ENCODE measurements at regions of chr1 and their contacts with region 1.

Region 1: GRCh38 chr1:87292684-87293493 is 35.8 kb upstream of the LMO4 start:
- DNase-seq: no peak
- ATAC-seq: no peak
- H3K4me3 ChIP-seq: no peak overlapping the region
- H3K27ac ChIP-seq: no peak overlapping the region
- H3K4me1 ChIP-seq: no peaks in the 10 kb centered on the region
- H3K27me3 ChIP-seq: no peaks in the 10 kb centered on the region

Region 2: DNA sequence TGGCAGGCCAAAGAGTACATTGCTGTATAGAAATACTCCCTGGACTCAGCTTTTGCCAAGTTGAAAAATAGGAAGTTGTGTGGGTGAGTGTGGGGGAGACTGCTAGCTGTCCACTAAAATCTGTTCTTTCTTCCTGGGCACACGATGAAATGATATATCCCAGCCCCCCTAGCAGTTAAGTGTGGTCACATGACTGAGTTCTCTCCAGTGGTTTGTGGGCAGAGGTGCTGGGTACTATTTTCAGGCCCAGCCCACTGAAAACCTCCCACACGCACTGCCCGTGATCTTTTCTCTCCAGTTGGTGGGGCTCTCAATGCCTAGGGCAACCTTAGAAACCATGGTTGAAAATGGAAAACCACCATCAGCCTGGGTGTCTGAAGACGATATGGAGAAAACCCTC is 84.0 kb before region 1 on chr1:
- intact Hi-C with region 1: no loop called
- DNase-seq: no peak
- ATAC-seq: no peak
- H3K4me3 ChIP-seq: no peak overlapping the region
- H3K27ac ChIP-seq: no peak overlapping the region
- H3K4me1 ChIP-seq: no peaks in the 10 kb centered on the region
- H3K27me3 ChIP-seq: no peaks in the 10 kb centered on the region

Region 3: DNA sequence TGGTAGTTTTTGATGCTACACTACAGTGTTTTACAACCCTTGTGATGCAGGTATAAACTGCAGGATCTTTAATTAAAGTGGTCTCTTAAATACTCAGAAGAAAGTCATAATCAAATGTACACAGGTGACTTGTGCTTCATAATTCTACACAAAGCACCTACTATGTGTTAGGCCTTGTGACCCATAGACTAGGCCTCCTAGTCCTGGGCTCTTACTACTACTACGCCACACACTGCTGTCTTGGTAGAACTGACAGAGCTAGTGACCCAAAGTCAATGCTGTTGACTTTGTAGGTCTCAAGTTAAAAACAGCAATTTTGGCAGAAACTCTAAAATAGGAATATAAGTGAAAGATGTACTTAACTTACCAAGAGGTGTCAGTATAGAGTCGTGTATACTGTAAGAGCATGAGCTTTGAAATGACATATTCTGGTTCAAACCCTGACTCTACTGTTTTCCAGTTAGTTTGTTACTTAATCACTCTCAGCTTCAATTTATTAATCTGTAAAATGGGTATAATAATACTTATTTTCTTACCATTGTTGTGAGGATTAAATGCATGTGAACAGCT is 12.8 kb before region 1 on chr1:
- intact Hi-C with region 1: loop called in 1 of 2 experiments (anchors 1 kb)
- DNase-seq: no peak
- ATAC-seq: no peak
- H3K4me3 ChIP-seq: no peak overlapping the region
- H3K27ac ChIP-seq: no peak overlapping the region
- H3K4me1 ChIP-seq: no peaks in the 10 kb centered on the region
- H3K27me3 ChIP-seq: no peaks in the 10 kb centered on the region

Region 4: GRCh38 chr1:88061492-88062177 is 768.7 kb after region 1 on chr1:
- intact Hi-C with region 1: loop called in 1 of 2 experiments (anchors 10 kb)
- DNase-seq: peak in 1 of 2 donors; percentile 61
- ATAC-seq: peak; percentile 76
- H3K4me3 ChIP-seq: no peak overlapping the region
- H3K27ac ChIP-seq: no peak overlapping the region
- H3K4me1 ChIP-seq: peaks cover 0 to 2% of the 10 kb centered on the region in 2 donors
- H3K27me3 ChIP-seq: no peaks in the 10 kb centered on the region

Region 5: DNA sequence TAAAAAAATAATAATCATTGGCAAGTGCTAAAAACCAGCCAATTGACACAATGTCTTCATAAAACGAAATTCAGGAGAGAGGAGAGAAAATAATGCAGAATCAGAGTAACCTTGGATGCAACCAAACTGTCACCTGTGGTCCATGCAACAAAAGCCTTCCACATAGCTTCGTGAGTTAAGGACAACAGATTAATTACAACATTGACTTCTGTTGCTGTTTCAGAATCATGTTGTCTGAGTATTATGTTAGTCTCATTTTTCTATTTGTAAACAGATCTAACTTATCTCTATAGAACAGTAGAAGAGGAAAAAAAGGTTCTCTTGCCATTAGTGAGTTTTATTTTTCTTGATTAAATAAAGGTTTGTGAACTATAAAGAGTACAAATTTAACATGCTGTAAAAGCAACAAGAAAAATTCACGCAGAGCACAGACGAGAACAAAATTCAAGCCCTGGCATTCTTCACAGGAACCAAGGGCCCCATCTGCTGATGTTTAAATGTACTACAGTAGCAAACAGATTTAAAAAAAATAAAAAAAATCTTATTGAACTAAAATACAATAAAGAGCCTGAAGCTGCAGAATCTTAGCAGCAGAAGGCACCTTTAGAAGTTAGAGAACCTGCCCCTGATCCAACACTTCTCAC is 1010.1 kb after region 1 on chr1:
- intact Hi-C with region 1: loop called (anchors 5 kb)
- DNase-seq: no peak
- ATAC-seq: no peak
- H3K4me3 ChIP-seq: no peak overlapping the region
- H3K27ac ChIP-seq: no peak overlapping the region
- H3K4me1 ChIP-seq: no peaks in the 10 kb centered on the region
- H3K27me3 ChIP-seq: no peaks in the 10 kb centered on the region

Measured in aorta (tissue), 5 donors.